Caco-2 (cell line): ENCODE measurements at regions of chr2 and their contacts with region 1.

Region 1: GRCh38 chr2:62705007-62705829 is at the start of gene EHBP1:
- DNase-seq: peak; percentile 100
- H3K4me3 ChIP-seq: peak within 1 kb of the TSS; percentile 86
- H3K4me3 Mint-ChIP-seq: peak within 1 kb of the TSS; percentile 91
- H3K27ac Mint-ChIP-seq: peak within 1 kb of the TSS; percentile 87
- H3K4me1 ChIP-seq: peaks cover 34% of the 10 kb centered on the region
- H3K4me1 Mint-ChIP-seq: peaks cover 29% of the 10 kb centered on the region
- H3K27me3 ChIP-seq: no peaks in the 10 kb centered on the region
- H3K27me3 Mint-ChIP-seq: no peaks in the 10 kb centered on the region
- CTCF ChIP-seq: no peak
- total RNA-seq, gene EHBP1: 120 and 123 TPM in 2 replicates

Region 2: GRCh38 chr2:62415019-62415431 is 290.2 kb before region 1 on chr2:
- CTCF ChIA-PET with region 1: no interaction called
- POLR2A ChIA-PET with region 1: no interaction called
- intact Hi-C with region 1: no loop called
- DNase-seq: no peak
- H3K4me3 ChIP-seq: no peak overlapping the region
- H3K4me3 Mint-ChIP-seq: no peak overlapping the region
- H3K27ac Mint-ChIP-seq: no peak overlapping the region
- H3K4me1 ChIP-seq: peaks cover 17% of the 10 kb centered on the region
- H3K4me1 Mint-ChIP-seq: peaks cover 23% of the 10 kb centered on the region
- H3K27me3 ChIP-seq: no peaks in the 10 kb centered on the region
- H3K27me3 Mint-ChIP-seq: no peaks in the 10 kb centered on the region
- CTCF ChIP-seq: no peak

Region 3: DNA sequence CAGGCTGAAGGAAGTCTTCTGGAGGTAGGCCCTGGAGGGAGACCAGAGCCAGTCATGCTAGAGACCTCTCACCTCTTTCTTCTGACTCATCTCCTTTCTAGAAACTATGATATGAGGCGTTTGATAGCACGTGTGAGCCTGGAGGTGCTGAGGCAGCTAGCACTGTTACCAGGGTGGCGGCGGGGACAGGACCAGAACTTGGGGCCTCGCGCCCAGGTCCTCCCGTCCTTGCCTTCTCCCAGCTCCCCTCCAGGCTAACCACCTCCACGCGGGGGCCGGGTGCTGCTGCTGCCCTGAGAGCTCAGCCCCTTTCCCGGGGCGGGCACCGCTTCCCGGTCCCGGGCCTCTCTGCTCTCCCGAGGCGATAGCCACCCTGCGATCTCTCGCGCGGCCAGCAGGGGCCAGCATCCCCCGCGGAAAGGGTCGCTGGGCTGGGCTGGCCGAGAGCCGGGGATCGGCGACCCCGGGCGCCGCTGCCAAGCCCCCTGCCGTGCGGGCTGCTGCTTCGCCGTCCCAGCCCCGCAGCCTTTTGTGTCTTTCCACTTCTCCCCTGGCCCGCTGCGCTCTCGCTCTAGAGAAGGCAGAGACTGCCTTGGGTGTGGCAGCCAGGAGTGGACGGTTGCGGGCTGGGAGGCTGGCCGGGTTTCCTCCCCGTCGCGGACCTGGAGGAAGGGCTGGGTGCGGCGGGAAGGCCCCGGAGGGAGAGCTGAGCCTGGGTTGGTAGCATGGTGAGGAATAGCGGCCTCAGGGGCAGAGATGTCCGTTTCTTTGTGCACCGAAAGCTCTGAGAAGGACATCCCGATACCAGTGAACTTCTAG is 248.3 kb before region 1 on chr2:
- CTCF ChIA-PET with region 1: interaction called, 9 read pairs
- POLR2A ChIA-PET with region 1: interaction called, 3 read pairs
- intact Hi-C with region 1: loop called (anchors 1 kb)
- DNase-seq: peak; percentile 82 to 95
- H3K4me3 ChIP-seq: peak overlapping the region; percentile 68
- H3K4me3 Mint-ChIP-seq: peak overlapping the region; percentile 75
- H3K27ac Mint-ChIP-seq: peak overlapping the region; percentile 66
- H3K4me1 ChIP-seq: peaks cover 38% of the 10 kb centered on the region
- H3K4me1 Mint-ChIP-seq: peaks cover 8% of the 10 kb centered on the region
- H3K27me3 ChIP-seq: no peaks in the 10 kb centered on the region
- H3K27me3 Mint-ChIP-seq: no peaks in the 10 kb centered on the region
- CTCF ChIP-seq: peak; percentile 92 to 98

Region 4: DNA sequence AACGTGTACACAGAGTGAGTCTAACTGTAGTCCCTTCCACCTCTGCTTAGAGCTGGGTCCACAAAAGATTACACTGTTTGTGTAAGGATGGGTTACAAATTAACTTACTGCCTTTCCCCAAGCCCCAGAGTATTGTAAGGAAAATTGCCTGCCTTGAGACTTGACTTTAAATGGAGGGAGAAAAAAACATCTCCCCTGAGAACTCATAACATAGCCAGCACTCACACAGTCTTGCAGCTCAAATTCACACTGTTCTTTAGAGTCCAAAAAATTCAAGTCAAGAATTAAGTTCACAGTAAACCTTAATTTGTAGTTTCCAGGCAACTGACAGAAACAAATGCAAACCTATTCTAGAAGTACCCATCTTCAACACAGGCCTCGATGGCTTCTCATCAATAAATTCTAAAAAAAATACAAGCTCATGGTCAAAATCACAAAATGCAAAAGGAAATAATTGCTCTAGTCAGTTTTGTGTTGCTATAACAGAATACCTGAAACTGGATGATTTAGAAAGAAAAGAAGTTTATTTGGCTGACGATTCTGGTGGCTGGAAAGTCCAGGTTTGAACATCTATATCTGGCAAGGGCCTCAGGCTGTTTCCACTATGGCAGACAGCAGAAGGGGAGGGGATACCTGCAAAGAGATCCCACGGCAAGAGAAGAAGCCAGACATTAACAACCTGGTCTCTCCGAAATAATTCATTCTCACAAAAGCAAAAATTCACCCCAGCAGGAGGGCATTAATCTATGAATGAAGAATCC is 164.6 kb before region 1 on chr2:
- CTCF ChIA-PET with region 1: no interaction called
- POLR2A ChIA-PET with region 1: no interaction called
- intact Hi-C with region 1: loop called (anchors 1 kb)
- DNase-seq: peak in 1 of 2 experiments; percentile 67
- H3K4me3 ChIP-seq: no peak overlapping the region
- H3K4me3 Mint-ChIP-seq: peak overlapping the region; percentile 9
- H3K27ac Mint-ChIP-seq: peak overlapping the region; percentile 78
- H3K4me1 ChIP-seq: peaks cover 60% of the 10 kb centered on the region
- H3K4me1 Mint-ChIP-seq: peaks cover 61% of the 10 kb centered on the region
- H3K27me3 ChIP-seq: no peaks in the 10 kb centered on the region
- H3K27me3 Mint-ChIP-seq: no peaks in the 10 kb centered on the region
- CTCF ChIP-seq: no peak

Region 5: DNA sequence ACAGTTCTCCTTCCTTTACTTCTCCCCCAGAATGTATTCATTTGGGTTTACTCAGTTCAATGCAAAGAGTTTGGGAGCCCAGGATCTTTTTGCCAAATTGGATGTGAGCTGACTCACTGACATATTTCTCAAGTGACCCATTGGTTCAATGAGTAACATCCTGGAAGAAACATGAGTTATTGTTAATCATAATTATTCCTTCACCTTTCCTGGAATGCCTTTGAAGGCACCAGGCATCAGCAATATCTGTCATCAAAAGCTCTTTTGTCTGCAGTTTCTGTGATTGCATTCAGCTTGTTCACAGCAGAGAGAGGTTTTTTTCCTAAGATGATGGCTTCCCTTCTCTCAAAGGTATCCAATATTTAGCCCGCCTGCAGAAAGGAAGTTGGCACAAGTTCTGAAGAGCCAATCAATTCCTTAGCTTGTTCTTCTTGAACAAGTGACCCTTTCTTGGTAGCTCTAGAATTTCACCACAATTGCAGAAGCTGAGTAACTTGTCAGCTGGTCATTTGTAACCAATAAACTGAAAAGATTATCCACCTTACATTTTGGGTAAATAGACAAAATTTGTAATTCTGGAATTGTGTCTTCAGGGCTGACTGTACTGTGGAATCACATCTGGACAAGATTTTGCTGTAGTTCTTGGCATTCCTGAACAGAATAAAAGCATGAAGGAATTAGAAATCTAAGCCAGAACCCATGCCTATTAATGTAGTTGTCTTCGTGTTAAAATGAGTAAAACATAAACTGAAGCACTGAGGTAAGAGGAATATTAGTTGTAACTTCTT is 127.0 kb before region 1 on chr2:
- CTCF ChIA-PET with region 1: no interaction called
- POLR2A ChIA-PET with region 1: no interaction called
- intact Hi-C with region 1: loop called (anchors 2 kb)
- DNase-seq: peak in 1 of 2 experiments; percentile 50
- H3K4me3 ChIP-seq: no peak overlapping the region
- H3K4me3 Mint-ChIP-seq: peak overlapping the region; percentile 36
- H3K27ac Mint-ChIP-seq: peak overlapping the region; percentile 92
- H3K4me1 ChIP-seq: peaks cover 60% of the 10 kb centered on the region
- H3K4me1 Mint-ChIP-seq: peaks cover 54% of the 10 kb centered on the region
- H3K27me3 ChIP-seq: no peaks in the 10 kb centered on the region
- H3K27me3 Mint-ChIP-seq: no peaks in the 10 kb centered on the region
- CTCF ChIP-seq: no peak

Region 6: GRCh38 chr2:62604336-62604735 is 100.9 kb before region 1 on chr2:
- CTCF ChIA-PET with region 1: no interaction called
- POLR2A ChIA-PET with region 1: no interaction called
- intact Hi-C with region 1: no loop called
- DNase-seq: no peak
- H3K4me3 ChIP-seq: no peak overlapping the region
- H3K4me3 Mint-ChIP-seq: no peak overlapping the region
- H3K27ac Mint-ChIP-seq: no peak overlapping the region
- H3K4me1 ChIP-seq: no peaks in the 10 kb centered on the region
- H3K4me1 Mint-ChIP-seq: no peaks in the 10 kb centered on the region
- H3K27me3 ChIP-seq: no peaks in the 10 kb centered on the region
- H3K27me3 Mint-ChIP-seq: no peaks in the 10 kb centered on the region
- CTCF ChIP-seq: no peak

Region 7: DNA sequence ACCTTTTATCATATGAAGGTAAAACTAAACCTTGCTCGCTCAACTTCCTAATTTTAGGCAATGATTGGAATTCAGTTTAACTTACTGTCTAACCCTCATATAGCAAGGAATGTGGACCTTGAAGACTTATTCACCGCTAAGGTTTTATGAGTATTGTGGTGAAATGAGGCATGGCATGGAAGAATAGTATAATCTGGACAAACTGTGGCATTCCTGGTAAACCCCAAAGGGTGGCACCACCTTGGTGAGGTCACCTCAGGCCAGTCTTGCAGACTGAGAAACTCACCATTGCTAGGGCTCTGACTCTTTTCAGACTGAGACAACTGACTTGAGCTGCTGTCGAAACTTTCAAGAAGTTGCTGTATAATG is 50.8 kb before region 1 on chr2:
- CTCF ChIA-PET with region 1: interaction called, 4 read pairs
- POLR2A ChIA-PET with region 1: interaction called, 5 read pairs
- intact Hi-C with region 1: loop called (anchors 1 kb)
- DNase-seq: peak in 1 of 2 experiments; percentile 37
- H3K4me3 ChIP-seq: no peak overlapping the region
- H3K4me3 Mint-ChIP-seq: peak overlapping the region; percentile 47
- H3K27ac Mint-ChIP-seq: peak overlapping the region; percentile 81
- H3K4me1 ChIP-seq: peaks cover 24% of the 10 kb centered on the region
- H3K4me1 Mint-ChIP-seq: peaks cover 27% of the 10 kb centered on the region
- H3K27me3 ChIP-seq: no peaks in the 10 kb centered on the region
- H3K27me3 Mint-ChIP-seq: no peaks in the 10 kb centered on the region
- CTCF ChIP-seq: no peak

Region 8: DNA sequence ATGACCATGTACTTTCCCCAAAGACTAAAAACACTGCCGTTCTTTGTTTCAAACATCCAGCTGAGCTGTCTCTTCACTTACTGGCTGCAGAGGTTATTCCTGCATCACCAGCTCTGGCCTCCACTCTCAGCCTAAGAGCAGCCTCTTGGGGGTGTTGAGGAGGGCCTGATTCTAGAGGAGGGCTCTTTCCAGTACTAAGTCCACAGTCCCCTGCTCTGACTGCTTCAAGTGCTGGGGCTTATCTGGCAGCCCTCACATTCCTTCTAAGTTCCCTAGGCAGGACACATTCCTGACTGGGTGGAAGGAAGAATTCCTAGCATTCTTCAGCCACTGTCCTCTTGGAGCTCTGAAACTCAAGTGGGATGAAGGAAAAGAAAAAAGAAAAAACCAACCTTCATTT is 32.6 kb before region 1 on chr2:
- CTCF ChIA-PET with region 1: interaction called, 5 read pairs
- POLR2A ChIA-PET with region 1: interaction called, 12 read pairs
- intact Hi-C with region 1: loop called (anchors 1 kb)
- DNase-seq: peak; percentile 90 to 97
- H3K4me3 ChIP-seq: no peak overlapping the region
- H3K4me3 Mint-ChIP-seq: peak overlapping the region; percentile 48
- H3K27ac Mint-ChIP-seq: no peak overlapping the region
- H3K4me1 ChIP-seq: peaks cover 55% of the 10 kb centered on the region
- H3K4me1 Mint-ChIP-seq: peaks cover 23% of the 10 kb centered on the region
- H3K27me3 ChIP-seq: no peaks in the 10 kb centered on the region
- H3K27me3 Mint-ChIP-seq: no peaks in the 10 kb centered on the region
- CTCF ChIP-seq: peak in 1 of 2 experiments; percentile 15

Region 9: GRCh38 chr2:62774555-62775366 is 69.5 kb after region 1 on chr2:
- CTCF ChIA-PET with region 1: no interaction called
- POLR2A ChIA-PET with region 1: no interaction called
- intact Hi-C with region 1: loop called (anchors 1 kb)
- DNase-seq: peak in 1 of 2 experiments; percentile 60
- H3K4me3 ChIP-seq: no peak overlapping the region
- H3K4me3 Mint-ChIP-seq: no peak overlapping the region
- H3K27ac Mint-ChIP-seq: peak overlapping the region; percentile 69
- H3K4me1 ChIP-seq: 0 out of 2 replicates have a peak, but pooled peaks cover 5% of the 10 kb centered on the region
- H3K4me1 Mint-ChIP-seq: peaks cover 29% of the 10 kb centered on the region
- H3K27me3 ChIP-seq: no peaks in the 10 kb centered on the region
- H3K27me3 Mint-ChIP-seq: no peaks in the 10 kb centered on the region
- CTCF ChIP-seq: peak; percentile 72 to 86

Region 10: DNA sequence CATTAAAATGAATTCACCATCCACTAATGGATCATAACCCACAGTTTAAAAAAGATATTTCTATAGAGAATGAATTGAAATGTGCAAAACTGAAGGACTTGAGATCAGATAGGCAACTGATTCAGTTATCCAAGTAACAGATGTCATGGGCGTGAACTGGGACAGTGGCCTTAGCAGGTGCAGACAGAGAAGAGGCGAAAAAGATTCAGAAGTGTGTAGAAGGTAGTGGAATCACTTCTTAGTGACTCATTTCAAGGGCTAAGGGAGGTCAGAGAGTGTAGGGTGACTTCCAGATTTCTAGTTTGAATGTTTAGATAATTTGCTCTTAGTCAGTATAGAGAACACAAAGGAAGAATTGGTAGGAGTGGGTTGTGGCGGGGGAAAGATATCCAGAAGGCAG is 80.0 kb after region 1 on chr2:
- CTCF ChIA-PET with region 1: no interaction called
- POLR2A ChIA-PET with region 1: no interaction called
- intact Hi-C with region 1: no loop called
- DNase-seq: no peak
- H3K4me3 ChIP-seq: no peak overlapping the region
- H3K4me3 Mint-ChIP-seq: no peak overlapping the region
- H3K27ac Mint-ChIP-seq: no peak overlapping the region
- H3K4me1 ChIP-seq: no peaks in the 10 kb centered on the region; the same call in 1 of the 2 replicates
- H3K4me1 Mint-ChIP-seq: peaks cover 20% of the 10 kb centered on the region
- H3K27me3 ChIP-seq: no peaks in the 10 kb centered on the region
- H3K27me3 Mint-ChIP-seq: no peaks in the 10 kb centered on the region
- CTCF ChIP-seq: no peak

Region 11: DNA sequence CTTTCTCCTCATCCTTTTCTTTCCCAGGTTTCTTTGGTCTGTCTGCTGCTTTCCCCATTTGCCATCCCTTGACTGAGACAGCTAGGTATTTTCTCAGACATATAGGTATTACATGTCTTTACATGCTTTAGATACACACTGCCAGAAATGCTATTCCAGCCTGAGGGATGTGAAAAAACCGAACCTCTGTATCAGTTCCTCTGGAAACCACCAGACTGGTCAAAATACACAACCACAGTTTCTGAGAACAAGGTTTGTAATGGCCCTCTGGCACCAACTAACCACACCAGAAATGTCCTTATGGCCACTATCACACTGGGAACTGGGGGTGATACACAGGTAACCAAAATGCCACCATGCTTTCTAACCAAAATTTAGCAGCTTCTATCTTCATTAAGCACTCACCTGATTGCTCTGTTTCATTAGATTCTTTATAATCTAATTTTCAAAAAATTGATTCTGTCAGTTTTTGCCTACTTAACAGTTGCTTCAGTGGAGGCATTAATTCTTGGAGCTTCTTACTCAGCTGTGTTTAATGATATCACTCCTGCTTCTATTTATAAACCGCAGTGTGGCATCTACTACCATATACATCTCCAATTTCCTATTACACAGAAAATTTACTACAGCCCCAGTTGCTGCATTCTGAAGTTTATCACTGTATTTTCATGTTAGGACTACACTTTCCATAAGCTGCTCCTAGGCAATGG is 639.5 kb after region 1 on chr2:
- CTCF ChIA-PET with region 1: no interaction called
- POLR2A ChIA-PET with region 1: no interaction called
- intact Hi-C with region 1: no loop called
- DNase-seq: no peak
- H3K4me3 ChIP-seq: no peak overlapping the region
- H3K4me3 Mint-ChIP-seq: no peak overlapping the region
- H3K27ac Mint-ChIP-seq: no peak overlapping the region
- H3K4me1 ChIP-seq: no peaks in the 10 kb centered on the region
- H3K4me1 Mint-ChIP-seq: no peaks in the 10 kb centered on the region
- H3K27me3 ChIP-seq: no peaks in the 10 kb centered on the region
- H3K27me3 Mint-ChIP-seq: no peaks in the 10 kb centered on the region
- CTCF ChIP-seq: no peak